CD4-positive, alpha-beta memory T cell (primary cell): ENCODE measurements at regions of chr2 and their contacts with region 1.

Region 1: GRCh38 chr2:209074711-209075110 is 349.1 kb upstream of the MAP2 start:
- DNase-seq: no peak
- H3K4me3 ChIP-seq: no peak overlapping the region
- H3K4me3 Mint-ChIP-seq: no peak overlapping the region
- H3K27ac ChIP-seq: no peak overlapping the region
- H3K27ac Mint-ChIP-seq: no peak overlapping the region
- H3K4me1 ChIP-seq: no peaks in the 10 kb centered on the region
- H3K4me1 Mint-ChIP-seq: no peaks in the 10 kb centered on the region
- H3K27me3 ChIP-seq: no peaks in the 10 kb centered on the region
- H3K27me3 Mint-ChIP-seq: no peaks in the 10 kb centered on the region

Region 2: DNA sequence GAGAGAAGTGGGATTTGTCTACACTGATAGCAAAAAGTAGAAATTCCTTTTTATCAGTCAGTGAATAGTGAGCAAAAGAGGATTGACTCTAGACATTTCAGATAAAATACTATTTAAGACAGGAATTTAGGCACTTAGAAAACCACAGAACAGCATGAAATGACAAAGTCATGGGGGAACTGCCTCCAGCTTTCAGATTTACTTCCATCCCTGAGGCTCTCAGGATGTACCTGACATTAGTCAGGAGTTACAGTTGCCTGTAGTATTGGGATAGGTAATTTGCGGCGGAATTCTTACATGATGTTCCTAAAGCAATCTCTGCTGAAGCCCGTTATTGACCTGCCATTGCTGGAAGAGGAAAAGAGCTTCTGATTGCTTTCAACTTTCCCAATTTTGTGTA is 12.1 kb after region 1 on chr2:
- CTCF ChIA-PET with region 1: no interaction called
- POLR2A ChIA-PET with region 1: no interaction called
- intact Hi-C with region 1: loop called (anchors 1 kb)
- DNase-seq: no peak
- H3K4me3 ChIP-seq: no peak overlapping the region
- H3K4me3 Mint-ChIP-seq: no peak overlapping the region
- H3K27ac ChIP-seq: no peak overlapping the region
- H3K27ac Mint-ChIP-seq: no peak overlapping the region
- H3K4me1 ChIP-seq: no peaks in the 10 kb centered on the region
- H3K4me1 Mint-ChIP-seq: no peaks in the 10 kb centered on the region
- H3K27me3 ChIP-seq: no peaks in the 10 kb centered on the region
- H3K27me3 Mint-ChIP-seq: no peaks in the 10 kb centered on the region